ENCODE measurements at regions of chr5 and their contacts with region 1.

Region 1: DNA sequence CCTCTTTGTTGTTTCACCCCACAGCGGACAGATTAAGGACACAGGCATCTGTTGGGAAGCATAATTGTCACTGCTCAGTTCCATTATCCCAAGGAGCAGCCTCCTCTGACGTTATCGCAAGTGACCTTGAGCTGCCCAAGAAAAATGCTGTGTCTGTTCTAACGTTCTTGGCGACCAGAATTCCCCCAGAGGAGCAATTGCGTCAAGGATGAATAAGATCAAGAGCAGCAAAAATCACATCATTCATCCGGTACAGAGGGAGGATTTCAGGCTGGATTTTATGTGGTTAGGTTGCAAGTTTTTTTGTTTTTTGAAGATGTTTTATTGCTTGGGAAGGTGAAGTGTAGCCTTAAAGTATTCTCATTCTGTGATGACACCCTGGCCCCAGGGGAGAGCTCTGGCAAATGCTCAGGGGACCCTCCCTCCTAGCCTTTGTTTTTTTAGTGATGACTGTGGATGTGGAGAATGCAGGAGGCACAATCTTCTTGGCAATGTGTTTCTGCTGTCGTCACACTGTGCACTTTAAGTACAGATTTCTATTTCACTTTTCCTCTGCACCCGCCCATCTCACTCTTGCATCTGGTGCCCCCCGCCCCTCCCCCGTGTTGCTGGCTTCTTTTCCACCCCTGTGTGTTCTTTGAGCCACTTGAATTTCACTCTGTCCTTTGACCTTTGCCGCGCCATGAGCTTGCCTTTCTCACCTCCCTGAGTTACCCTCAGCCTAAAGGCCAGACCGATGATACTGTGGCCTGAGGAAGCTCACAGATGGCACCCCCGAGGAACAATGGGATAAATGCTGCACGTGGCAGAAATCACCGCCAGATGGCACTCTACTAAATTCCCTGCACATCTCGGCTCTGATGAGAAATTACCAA is 308.5 kb downstream of the RAB3C start:
- DNase-seq: peak; percentile 74 to 89 (median 80)
- H3K4me3 ChIP-seq: no peak overlapping the region
- H3K27ac ChIP-seq: peak overlapping the region; percentile 74 to 82
- H3K4me1 ChIP-seq: peaks cover 3% of the 10 kb centered on the region
- H3K27me3 ChIP-seq: no peaks in the 10 kb centered on the region
- CTCF ChIP-seq: peak in 2 of 3 donors; percentile 65 to 68
- EP300 ChIP-seq: no peak
- POLR2A ChIP-seq: no peak

Region 2: DNA sequence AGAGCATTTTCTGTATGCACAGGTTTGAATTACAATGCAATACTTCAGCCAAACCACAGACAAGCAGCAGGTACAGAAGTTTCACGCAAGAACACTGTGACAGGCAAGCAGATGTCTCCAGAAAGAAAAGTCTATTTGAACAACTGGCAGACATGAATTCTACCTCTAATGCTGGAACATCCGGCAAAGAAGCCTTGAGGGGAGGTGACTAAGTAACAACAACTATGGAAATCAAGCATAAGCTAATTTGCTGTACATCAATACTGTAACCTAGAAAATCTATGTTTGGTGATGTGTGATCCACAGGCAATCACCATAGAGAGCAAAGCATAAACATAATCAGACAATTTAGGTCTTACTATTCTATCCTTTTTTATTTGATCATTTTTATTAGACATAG is 497.0 kb before region 1 on chr5:
- intact Hi-C with region 1: no loop called
- DNase-seq: no peak
- H3K4me3 ChIP-seq: no peak overlapping the region
- H3K27ac ChIP-seq: no peak overlapping the region
- H3K4me1 ChIP-seq: no peaks in the 10 kb centered on the region
- H3K27me3 ChIP-seq: no peaks in the 10 kb centered on the region
- CTCF ChIP-seq: no peak
- EP300 ChIP-seq: no peak
- POLR2A ChIP-seq: no peak

Region 3: DNA sequence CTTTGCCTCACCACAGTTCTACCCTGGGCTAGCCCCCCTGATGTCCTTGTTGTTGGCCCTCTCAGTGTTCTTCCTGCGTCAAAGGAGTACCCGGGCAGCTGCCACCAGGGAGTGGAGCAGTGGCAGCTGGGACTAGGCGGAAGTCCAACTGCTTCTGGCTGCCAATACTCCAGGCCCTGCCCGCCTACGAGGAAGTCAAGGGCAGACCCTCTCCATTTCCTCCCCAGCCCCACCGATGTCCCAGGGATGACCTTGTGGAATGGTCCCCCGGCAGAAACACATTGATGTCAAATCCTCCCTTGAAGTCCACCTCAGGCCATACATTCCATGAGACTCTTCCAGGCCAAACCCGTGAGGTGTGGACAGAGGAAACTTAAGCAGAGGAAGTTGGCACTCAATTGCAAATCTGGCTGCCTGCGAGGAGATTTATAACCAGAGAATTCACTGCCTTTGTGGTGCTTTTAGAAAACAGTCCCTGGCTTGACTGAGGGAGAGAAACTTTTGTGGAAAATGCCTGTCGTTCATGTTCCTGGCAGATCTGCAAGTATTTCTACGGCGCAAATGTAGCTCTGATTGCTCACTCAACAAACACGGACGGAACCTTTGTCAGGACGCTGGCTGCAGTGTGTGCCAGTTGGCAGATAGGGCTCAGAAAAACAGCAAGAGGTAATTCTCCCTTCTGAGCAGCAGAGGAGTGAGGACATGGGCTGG is 31.3 kb after region 1 on chr5:
- intact Hi-C with region 1: no loop called
- DNase-seq: peak in 4 of 5 donors; percentile 35 to 52 (median 38)
- H3K4me3 ChIP-seq: no peak overlapping the region
- H3K27ac ChIP-seq: no peak overlapping the region
- H3K4me1 ChIP-seq: no peaks in the 10 kb centered on the region
- H3K27me3 ChIP-seq: no peaks in the 10 kb centered on the region
- CTCF ChIP-seq: no peak
- EP300 ChIP-seq: no peak
- POLR2A ChIP-seq: no peak

Region 4: GRCh38 chr5:58940446-58940845 is 49.1 kb after region 1 on chr5:
- intact Hi-C with region 1: no loop called
- DNase-seq: no peak
- H3K4me3 ChIP-seq: no peak overlapping the region
- H3K27ac ChIP-seq: no peak overlapping the region
- H3K4me1 ChIP-seq: no peaks in the 10 kb centered on the region
- H3K27me3 ChIP-seq: no peaks in the 10 kb centered on the region
- CTCF ChIP-seq: no peak
- EP300 ChIP-seq: no peak
- POLR2A ChIP-seq: no peak

Region 5: GRCh38 chr5:59007460-59008063 is 116.2 kb after region 1 on chr5:
- intact Hi-C with region 1: loop called in 2 of 4 experiments (anchors 10 kb)
- DNase-seq: no peak
- H3K4me3 ChIP-seq: no peak overlapping the region
- H3K27ac ChIP-seq: no peak overlapping the region
- H3K4me1 ChIP-seq: no peaks in the 10 kb centered on the region
- H3K27me3 ChIP-seq: no peaks in the 10 kb centered on the region
- CTCF ChIP-seq: peak in 1 of 3 donors; percentile 56
- EP300 ChIP-seq: no peak
- POLR2A ChIP-seq: no peak

Region 6: GRCh38 chr5:59126708-59127573 is 235.6 kb after region 1 on chr5:
- intact Hi-C with region 1: loop called in 1 of 4 experiments (anchors 10 kb)
- DNase-seq: no peak
- H3K4me3 ChIP-seq: peak overlapping the region; percentile 26
- H3K27ac ChIP-seq: no peak overlapping the region
- H3K4me1 ChIP-seq: no peaks in the 10 kb centered on the region
- H3K27me3 ChIP-seq: no peaks in the 10 kb centered on the region
- CTCF ChIP-seq: no peak
- EP300 ChIP-seq: no peak
- POLR2A ChIP-seq: no peak

Measured in ovary (tissue), 10 donors.